ENCODE measurements at regions of chr1 and their contacts with region 1.

Region 1: GRCh38 chr1:203702130-203702577 is 62.8 kb upstream of the LAX1 start:
- DNase-seq: peak; percentile 83
- H3K4me3 Mint-ChIP-seq: no peak overlapping the region
- H3K27ac Mint-ChIP-seq: no peak overlapping the region
- H3K4me1 Mint-ChIP-seq: peaks cover 16% of the 10 kb centered on the region
- H3K27me3 Mint-ChIP-seq: no peaks in the 10 kb centered on the region
- CTCF ChIP-seq: peak; percentile 100

Region 2: GRCh38 chr1:202671122-202671797 is 1030.9 kb before region 1 on chr1:
- CTCF ChIA-PET with region 1: no interaction called
- POLR2A ChIA-PET with region 1: no interaction called
- intact Hi-C with region 1: no loop called
- DNase-seq: peak; percentile 70
- H3K4me3 Mint-ChIP-seq: no peak overlapping the region
- H3K27ac Mint-ChIP-seq: no peak overlapping the region
- H3K4me1 Mint-ChIP-seq: no peaks in the 10 kb centered on the region
- H3K27me3 Mint-ChIP-seq: peaks cover 33% of the 10 kb centered on the region
- CTCF ChIP-seq: no peak

Region 3: GRCh38 chr1:203492748-203493130 is 209.4 kb before region 1 on chr1:
- CTCF ChIA-PET with region 1: interaction called, 48 read pairs
- POLR2A ChIA-PET with region 1: no interaction called
- intact Hi-C with region 1: no loop called
- DNase-seq: no peak
- H3K4me3 Mint-ChIP-seq: no peak overlapping the region
- H3K27ac Mint-ChIP-seq: no peak overlapping the region
- H3K4me1 Mint-ChIP-seq: no peaks in the 10 kb centered on the region
- H3K27me3 Mint-ChIP-seq: peaks cover 24% of the 10 kb centered on the region
- CTCF ChIP-seq: no peak

Region 4: DNA sequence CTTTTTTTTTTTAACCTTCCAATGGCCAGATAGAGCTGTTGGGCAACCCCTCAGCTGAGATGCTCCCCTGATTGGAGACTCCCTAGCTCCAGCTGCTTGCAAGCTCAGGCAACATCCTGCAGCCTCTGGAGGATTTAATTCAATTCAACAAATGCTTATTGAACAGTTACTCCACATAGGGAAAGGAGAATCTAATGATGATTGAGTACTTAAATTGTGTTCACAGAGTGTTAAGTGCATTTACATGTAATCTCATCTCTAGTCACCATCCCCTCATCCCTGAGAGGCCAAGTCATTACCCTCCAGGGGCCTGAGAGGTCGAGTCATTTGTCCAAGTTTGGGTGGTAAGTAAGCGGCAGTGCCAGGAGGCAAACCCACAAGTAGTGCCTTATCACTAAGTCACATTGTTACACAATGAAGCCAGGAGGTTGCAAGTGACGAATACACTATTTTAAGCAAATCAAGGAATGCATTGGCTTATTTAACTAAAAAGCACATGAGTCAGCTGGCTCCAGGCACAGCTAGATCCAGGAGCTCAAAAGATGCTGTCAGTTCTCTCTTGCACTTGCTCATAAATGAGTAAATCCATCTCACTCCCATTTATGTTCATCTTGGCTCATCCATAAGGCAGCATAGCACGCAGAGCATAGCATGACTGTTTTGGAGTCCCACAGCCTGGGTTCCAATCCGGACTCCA is 143.9 kb before region 1 on chr1:
- CTCF ChIA-PET with region 1: interaction called, 19 read pairs
- POLR2A ChIA-PET with region 1: no interaction called
- intact Hi-C with region 1: no loop called
- DNase-seq: peak; percentile 99
- H3K4me3 Mint-ChIP-seq: no peak overlapping the region
- H3K27ac Mint-ChIP-seq: peak overlapping the region; percentile 44
- H3K4me1 Mint-ChIP-seq: peaks cover 27% of the 10 kb centered on the region
- H3K27me3 Mint-ChIP-seq: no peaks in the 10 kb centered on the region
- CTCF ChIP-seq: no peak

Region 5: GRCh38 chr1:203673550-203674427 is 28.4 kb before region 1 on chr1:
- CTCF ChIA-PET with region 1: interaction called, 15 read pairs
- POLR2A ChIA-PET with region 1: interaction called, 3 read pairs
- intact Hi-C with region 1: no loop called
- DNase-seq: peak; percentile 99
- H3K4me3 Mint-ChIP-seq: peak overlapping the region; percentile 1
- H3K27ac Mint-ChIP-seq: peak overlapping the region; percentile 6
- H3K4me1 Mint-ChIP-seq: peaks cover 36% of the 10 kb centered on the region
- H3K27me3 Mint-ChIP-seq: no peaks in the 10 kb centered on the region
- CTCF ChIP-seq: peak; percentile 39

Region 6: DNA sequence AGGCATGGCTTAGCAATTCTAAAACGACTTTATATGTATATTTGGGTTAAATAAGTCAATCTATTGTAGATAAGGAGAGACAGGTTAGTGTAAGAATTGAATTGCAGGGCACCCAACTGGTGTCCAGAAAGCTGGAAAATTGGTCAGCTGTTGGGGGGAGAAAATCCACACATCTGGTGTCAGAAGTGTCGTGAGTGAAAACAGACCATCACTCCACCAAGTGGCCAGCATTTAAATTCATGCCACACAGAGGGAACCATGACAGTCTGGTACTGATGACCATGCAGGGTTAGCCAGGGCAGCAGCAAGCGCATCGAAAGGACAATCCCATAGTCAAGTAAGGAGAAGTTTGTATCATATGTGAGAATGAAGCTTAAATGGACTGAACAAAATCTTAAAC is 74.5 kb after region 1 on chr1:
- CTCF ChIA-PET with region 1: interaction called, 10 read pairs
- POLR2A ChIA-PET with region 1: interaction called, 3 read pairs
- intact Hi-C with region 1: no loop called
- DNase-seq: peak; percentile 42
- H3K4me3 Mint-ChIP-seq: no peak overlapping the region
- H3K27ac Mint-ChIP-seq: no peak overlapping the region
- H3K4me1 Mint-ChIP-seq: no peaks in the 10 kb centered on the region
- H3K27me3 Mint-ChIP-seq: no peaks in the 10 kb centered on the region
- CTCF ChIP-seq: peak; percentile 26